Sigmoid colon (tissue), 7 donors: ENCODE measurements at regions of chr12 and their contacts with region 1.

Region 1: GRCh38 chr12:44446181-44446580 is 429.9 kb downstream of the NELL2 start:
- DNase-seq: no peak
- H3K4me3 ChIP-seq: no peak overlapping the region
- H3K27ac ChIP-seq: no peak overlapping the region
- H3K4me1 ChIP-seq: no peaks in the 10 kb centered on the region
- H3K27me3 ChIP-seq: no peaks in the 10 kb centered on the region
- CTCF ChIP-seq: no peak
- EP300 ChIP-seq: no peak
- POLR2A ChIP-seq: no peak

Region 2: GRCh38 chr12:44370982-44371381 is 75.2 kb before region 1 on chr12:
- intact Hi-C with region 1: loop called (anchors 2 kb)
- DNase-seq: no peak
- H3K4me3 ChIP-seq: no peak overlapping the region
- H3K27ac ChIP-seq: no peak overlapping the region
- H3K4me1 ChIP-seq: no peaks in the 10 kb centered on the region
- H3K27me3 ChIP-seq: no peaks in the 10 kb centered on the region
- CTCF ChIP-seq: no peak
- EP300 ChIP-seq: no peak
- POLR2A ChIP-seq: no peak

Region 3: DNA sequence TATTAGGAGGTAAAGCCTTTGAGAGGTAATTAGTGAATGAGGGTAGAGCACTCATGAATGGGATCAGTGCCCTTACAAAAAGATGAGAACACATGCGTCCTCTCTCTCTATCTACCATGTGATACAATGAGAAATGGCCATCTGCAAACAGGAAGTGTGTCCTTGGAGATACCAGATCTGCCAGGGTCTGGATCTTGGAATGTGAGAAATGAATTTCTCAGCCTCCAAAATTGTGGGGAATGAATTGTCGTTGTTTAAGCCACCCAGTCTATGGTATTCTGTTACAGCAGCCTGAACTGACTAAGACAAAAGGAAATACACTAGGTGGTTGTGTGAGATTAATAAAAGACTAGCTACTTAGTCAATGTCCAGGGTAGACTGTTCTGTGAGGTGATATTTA is 63.3 kb after region 1 on chr12:
- intact Hi-C with region 1: no loop called
- DNase-seq: no peak
- H3K4me3 ChIP-seq: no peak overlapping the region
- H3K27ac ChIP-seq: no peak overlapping the region
- H3K4me1 ChIP-seq: no peaks in the 10 kb centered on the region
- H3K27me3 ChIP-seq: no peaks in the 10 kb centered on the region
- CTCF ChIP-seq: no peak
- EP300 ChIP-seq: no peak
- POLR2A ChIP-seq: no peak